Esophagus muscularis mucosa (tissue), 4 donors: ENCODE measurements at regions of chr2 and their contacts with region 1.

Region 1: GRCh38 chr2:95402370-95403203 is at the start of gene FAHD2A:
- DNase-seq: peak; percentile 98
- H3K4me3 ChIP-seq: peak within 1 kb of the TSS; percentile 68 to 93 (median 84)
- H3K27ac ChIP-seq: peak within 1 kb of the TSS; percentile 82 to 88 (median 86)
- H3K4me1 ChIP-seq: peaks cover 16 to 31% (median 28%) of the 10 kb centered on the region in 4 donors
- H3K27me3 ChIP-seq: no peaks in the 10 kb centered on the region
- CTCF ChIP-seq: no peak
- EP300 ChIP-seq: no peak
- POLR2A ChIP-seq: peak; percentile 28
- total RNA-seq, gene FAHD2A: 11.2 to 20.0 (median 16.5) TPM

Region 2: DNA sequence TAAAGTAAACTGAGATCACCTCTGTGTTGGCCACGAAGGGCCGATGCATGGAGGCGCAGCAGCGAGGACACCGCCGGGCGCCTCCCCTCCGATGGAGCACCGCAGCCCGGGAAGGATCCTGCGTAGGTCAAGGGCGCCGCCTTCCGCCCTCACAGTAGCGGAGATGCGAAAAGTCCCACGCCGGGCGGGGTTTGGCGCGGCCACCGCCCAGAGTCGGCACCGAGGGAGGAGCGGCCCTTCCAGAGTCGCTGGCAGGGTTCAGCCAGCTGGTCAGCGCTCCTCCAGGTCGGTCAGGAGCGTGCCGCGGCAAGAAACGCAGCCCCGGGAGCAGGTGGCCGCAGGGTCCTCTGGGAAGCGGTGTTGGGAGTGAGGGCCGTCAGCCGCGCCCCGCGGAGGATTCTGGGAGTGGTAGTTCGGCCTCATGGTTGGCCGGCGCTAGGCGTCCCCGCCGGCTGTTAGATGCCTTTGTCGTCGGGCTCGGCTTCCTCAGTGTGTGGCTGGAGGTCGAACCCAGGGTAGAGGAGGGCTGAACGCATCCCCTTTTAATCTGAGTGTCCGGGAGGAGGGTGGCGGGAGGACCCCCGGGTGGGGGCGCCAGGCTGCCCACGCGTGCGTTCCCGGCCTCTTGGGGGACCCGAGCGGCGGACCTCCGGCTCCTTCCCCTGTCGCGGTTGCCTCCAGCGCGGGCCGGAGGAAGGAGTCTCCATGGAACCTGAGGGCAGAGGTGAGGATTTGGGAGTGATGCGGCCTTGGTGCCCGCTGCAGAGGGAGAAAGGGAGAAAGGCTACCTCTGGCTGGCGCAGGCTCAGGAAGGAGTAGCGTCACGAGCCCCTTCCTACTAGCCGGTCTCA is 195.3 kb before region 1 on chr2 and contains the start of gene ZNF892:
- intact Hi-C with region 1: no loop called
- DNase-seq: peak; percentile 97
- H3K4me3 ChIP-seq: peak within 1 kb of the TSS; percentile 76 to 94 (median 80)
- H3K27ac ChIP-seq: peak within 1 kb of the TSS; percentile 85 to 95 (median 92)
- H3K4me1 ChIP-seq: peaks cover 19 to 26% (median 22%) of the 10 kb centered on the region in 4 donors
- H3K27me3 ChIP-seq: no peaks in the 10 kb centered on the region
- CTCF ChIP-seq: peak; percentile 47 to 58 (median 49)
- EP300 ChIP-seq: no peak
- POLR2A ChIP-seq: no peak
- total RNA-seq, gene ZNF892: 3.5 to 12.0 (median 7.6) TPM

Region 3: DNA sequence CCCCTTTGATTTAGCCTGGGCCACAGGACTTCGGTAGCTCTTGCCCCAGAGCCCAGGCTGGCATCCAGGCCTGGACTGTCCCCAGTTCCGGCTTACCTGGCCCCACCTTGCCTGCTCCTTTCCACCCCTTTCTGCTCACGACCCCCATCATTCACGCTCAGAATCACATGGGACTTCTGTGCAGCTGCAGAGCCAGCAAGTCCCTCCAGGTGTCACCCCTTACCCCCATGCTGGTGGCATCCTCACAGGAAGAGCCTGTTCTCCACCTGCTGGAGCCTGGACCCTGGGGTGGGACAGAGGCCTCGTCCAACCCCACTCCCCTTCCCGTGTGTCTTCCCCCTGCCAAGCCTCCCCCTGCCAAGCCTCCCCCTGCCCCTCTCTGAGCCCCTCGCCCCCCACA is 113.3 kb before region 1 on chr2:
- intact Hi-C with region 1: no loop called
- DNase-seq: no peak
- H3K4me3 ChIP-seq: no peak overlapping the region
- H3K27ac ChIP-seq: no peak overlapping the region
- H3K4me1 ChIP-seq: no peaks in the 10 kb centered on the region
- H3K27me3 ChIP-seq: no peaks in the 10 kb centered on the region
- CTCF ChIP-seq: no peak
- EP300 ChIP-seq: no peak
- POLR2A ChIP-seq: no peak

Region 4: GRCh38 chr2:95314964-95315611 is 87.5 kb before region 1 on chr2:
- intact Hi-C with region 1: no loop called
- DNase-seq: no peak
- H3K4me3 ChIP-seq: no peak overlapping the region
- H3K27ac ChIP-seq: no peak overlapping the region
- H3K4me1 ChIP-seq: no peaks in the 10 kb centered on the region
- H3K27me3 ChIP-seq: peaks cover 0 to 33% (median 0%) of the 10 kb centered on the region in 4 donors
- CTCF ChIP-seq: peak; percentile 25 to 48 (median 37)
- EP300 ChIP-seq: no peak
- POLR2A ChIP-seq: no peak

Region 5: DNA sequence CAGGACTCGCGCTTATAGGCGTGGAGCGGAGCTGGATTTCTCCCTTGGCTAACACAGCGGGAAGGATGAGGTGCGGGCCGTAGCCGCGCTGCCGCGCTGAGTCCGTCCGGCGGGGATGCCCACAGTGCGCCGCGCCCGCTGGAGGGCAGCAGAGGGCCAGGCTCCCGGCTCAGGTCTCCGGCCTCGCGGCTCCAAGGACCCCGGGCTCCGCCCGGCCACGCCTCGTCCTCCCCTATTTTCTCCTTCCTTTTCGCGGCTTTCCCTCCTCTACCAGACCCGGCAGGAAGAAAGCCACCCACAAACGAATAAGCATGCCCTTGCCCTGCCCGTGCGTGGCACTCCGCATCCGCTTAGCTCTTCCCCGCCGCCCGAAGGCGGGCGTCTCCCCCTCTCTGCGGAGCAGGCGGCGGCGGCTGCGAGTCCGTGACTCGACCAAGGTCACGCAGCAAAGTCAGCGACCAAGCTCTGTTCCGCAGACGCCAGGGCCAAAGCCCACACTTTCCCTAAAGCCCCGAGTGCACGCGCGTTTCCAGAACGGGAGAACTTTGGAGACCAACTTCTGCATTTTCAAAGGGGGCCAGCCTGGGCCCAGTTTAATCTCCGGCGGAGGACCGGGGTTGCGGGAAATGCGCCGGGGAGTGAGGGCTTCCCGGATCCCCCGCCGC is 56.9 kb before region 1 on chr2:
- intact Hi-C with region 1: loop called (anchors 5 kb)
- DNase-seq: no peak
- H3K4me3 ChIP-seq: peak overlapping the region; percentile 76 to 85 (median 78)
- H3K27ac ChIP-seq: peak overlapping the region; percentile 83 to 90 (median 88)
- H3K4me1 ChIP-seq: peaks cover 5 to 45% (median 29%) of the 10 kb centered on the region in 4 donors
- H3K27me3 ChIP-seq: no peaks in the 10 kb centered on the region
- CTCF ChIP-seq: peak; percentile 81 to 95 (median 85)
- EP300 ChIP-seq: no peak
- POLR2A ChIP-seq: no peak

Region 6: DNA sequence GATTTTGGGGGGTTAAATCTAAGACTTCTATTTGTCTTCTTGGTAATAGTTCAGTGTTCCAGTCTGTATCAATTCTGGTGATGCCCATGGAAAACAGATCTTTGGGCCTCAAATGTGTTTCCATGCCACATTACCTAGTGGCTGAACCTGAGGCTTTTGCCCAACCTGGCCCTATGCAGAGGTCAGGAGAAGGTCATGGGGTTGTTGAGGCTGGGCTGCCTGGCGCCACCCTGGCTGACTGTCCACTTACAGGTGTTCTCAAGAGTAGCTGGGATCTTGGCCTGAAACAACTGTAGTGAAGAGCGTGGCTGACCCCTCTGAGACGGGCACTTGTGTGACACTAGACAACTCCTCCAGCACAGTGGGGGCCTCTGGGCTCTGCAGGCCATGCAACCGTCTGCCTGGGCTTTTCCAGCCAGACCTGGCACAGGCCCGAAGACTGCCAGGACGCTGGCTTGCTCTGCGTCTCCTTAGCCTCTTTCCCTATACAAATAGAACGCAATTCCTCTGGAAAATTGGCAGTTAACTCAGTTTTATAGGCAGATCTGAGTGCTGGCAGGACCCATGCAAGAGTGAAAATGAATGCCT is 317.0 kb after region 1 on chr2:
- intact Hi-C with region 1: loop called (anchors 5 kb)
- DNase-seq: no peak
- H3K4me3 ChIP-seq: no peak overlapping the region
- H3K27ac ChIP-seq: no peak overlapping the region
- H3K4me1 ChIP-seq: no peaks in the 10 kb centered on the region
- H3K27me3 ChIP-seq: no peaks in the 10 kb centered on the region
- CTCF ChIP-seq: no peak
- EP300 ChIP-seq: no peak
- POLR2A ChIP-seq: no peak